Activated CD4-positive, alpha-beta T cell treated with anti-CD3 and anti-CD28 coated beads for 36 hours (primary cell): ENCODE measurements at regions of chr7 and their contacts with region 1.

Region 1: GRCh38 chr7:1225441-1226185 is 7.1 kb upstream of the UNCX start:
- DNase-seq: peak; percentile 74
- ATAC-seq: peak; percentile 33
- H3K4me3 Mint-ChIP-seq: no peak overlapping the region
- H3K27ac Mint-ChIP-seq: no peak overlapping the region
- H3K4me1 Mint-ChIP-seq: no peaks in the 10 kb centered on the region
- H3K27me3 Mint-ChIP-seq: peaks cover 49% of the 10 kb centered on the region

Region 2: GRCh38 chr7:1240517-1241257 is 15.1 kb after region 1 on chr7:
- CTCF ChIA-PET with region 1: interaction called, 9 read pairs
- POLR2A ChIA-PET with region 1: no interaction called
- intact Hi-C with region 1: loop called (anchors 1 to 2 kb)
- DNase-seq: no peak
- ATAC-seq: no peak
- H3K4me3 Mint-ChIP-seq: no peak overlapping the region
- H3K27ac Mint-ChIP-seq: no peak overlapping the region
- H3K4me1 Mint-ChIP-seq: peaks cover 5% of the 10 kb centered on the region
- H3K27me3 Mint-ChIP-seq: peaks cover 55% of the 10 kb centered on the region

Region 3: GRCh38 chr7:1412322-1413261 is 187.0 kb after region 1 on chr7:
- CTCF ChIA-PET with region 1: no interaction called
- POLR2A ChIA-PET with region 1: no interaction called
- intact Hi-C with region 1: loop called (anchors 1 to 5 kb)
- DNase-seq: peak; percentile 97
- ATAC-seq: peak; percentile 82
- H3K4me3 Mint-ChIP-seq: no peak overlapping the region
- H3K27ac Mint-ChIP-seq: no peak overlapping the region
- H3K4me1 Mint-ChIP-seq: peaks cover 14% of the 10 kb centered on the region
- H3K27me3 Mint-ChIP-seq: peaks cover 5% of the 10 kb centered on the region

Region 4: GRCh38 chr7:1432411-1433082 is 206.9 kb after region 1 on chr7:
- CTCF ChIA-PET with region 1: interaction called, 3 read pairs
- POLR2A ChIA-PET with region 1: no interaction called
- intact Hi-C with region 1: loop called (anchors 1 kb)
- DNase-seq: peak; percentile 89
- ATAC-seq: peak; percentile 88
- H3K4me3 Mint-ChIP-seq: no peak overlapping the region
- H3K27ac Mint-ChIP-seq: no peak overlapping the region
- H3K4me1 Mint-ChIP-seq: peaks cover 3% of the 10 kb centered on the region
- H3K27me3 Mint-ChIP-seq: peaks cover 2% of the 10 kb centered on the region

Region 5: DNA sequence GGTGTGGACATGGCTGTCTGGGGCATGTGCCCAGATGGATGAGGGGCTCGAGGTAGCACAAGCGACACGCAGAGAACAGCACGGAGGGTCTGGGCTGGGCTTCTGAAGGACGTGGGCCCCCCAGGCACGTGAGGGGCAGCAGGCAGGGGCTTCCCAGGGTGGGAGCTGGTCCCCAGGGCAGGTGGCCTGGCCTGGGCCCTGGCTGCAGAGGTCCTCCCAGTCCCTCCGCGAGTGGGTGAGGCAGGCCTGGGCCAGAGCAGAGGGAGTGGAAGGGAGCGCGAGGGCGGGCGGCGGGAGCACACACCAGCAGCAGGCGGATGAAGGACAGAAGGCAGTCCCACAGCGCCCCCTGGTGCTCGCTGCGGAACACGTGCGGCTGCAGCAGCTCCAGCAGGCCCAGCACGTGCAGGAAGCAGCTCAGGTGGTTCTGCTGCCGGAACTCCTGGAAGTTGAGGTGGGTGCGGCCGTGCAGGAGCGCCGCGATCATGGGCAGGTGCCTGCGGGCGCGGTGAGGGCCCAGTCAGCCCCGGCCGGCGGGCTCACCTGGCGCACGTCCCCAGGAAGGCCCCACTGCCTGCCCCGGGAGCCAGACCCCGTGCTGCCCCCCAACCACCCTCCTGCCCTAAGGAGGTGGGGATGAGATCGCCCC is 248.4 kb after region 1 on chr7:
- CTCF ChIA-PET with region 1: interaction called, 3 read pairs
- POLR2A ChIA-PET with region 1: no interaction called
- intact Hi-C with region 1: loop called (anchors 1 kb)
- DNase-seq: peak; percentile 94
- ATAC-seq: peak; percentile 93
- H3K4me3 Mint-ChIP-seq: no peak overlapping the region
- H3K27ac Mint-ChIP-seq: no peak overlapping the region
- H3K4me1 Mint-ChIP-seq: peaks cover 5% of the 10 kb centered on the region
- H3K27me3 Mint-ChIP-seq: no peaks in the 10 kb centered on the region